ENCODE measurements at regions of chr7 and their contacts with region 1.

Region 1: DNA sequence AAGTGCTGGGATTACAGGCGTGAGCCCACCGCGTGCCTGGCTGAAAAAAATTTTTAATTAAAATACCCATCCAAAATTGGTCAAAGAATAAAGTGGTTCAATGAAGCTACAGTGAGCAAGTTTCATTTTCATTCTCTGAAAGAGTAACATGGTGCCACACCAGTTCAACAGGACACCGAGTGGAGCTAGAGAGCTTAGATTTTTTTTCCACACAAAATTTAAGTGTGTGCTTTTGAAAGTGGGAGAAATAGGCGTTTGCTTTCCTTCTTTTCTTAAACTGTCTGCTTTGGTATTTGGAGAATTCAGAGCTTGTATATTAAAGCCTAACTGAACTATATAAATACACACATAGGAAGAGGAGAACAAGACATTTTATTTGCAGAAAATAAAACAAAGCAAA is 43.4 kb downstream of the BPGM start:
- DNase-seq: peak; percentile 50
- H3K4me3 ChIP-seq: no peak overlapping the region
- H3K27ac ChIP-seq: peak overlapping the region; percentile 82 to 88; a peak in 3 of 4 replicates
- H3K4me1 ChIP-seq: peaks cover 12 to 39% of the 10 kb centered on the region in 2 experiments
- H3K27me3 ChIP-seq: no peaks in the 10 kb centered on the region
- CTCF ChIP-seq: peak; percentile 95
- EP300 ChIP-seq: no peak
- RAD21 ChIP-seq: peak; percentile 88

Region 2: GRCh38 chr7:134016223-134016941 is 673.6 kb before region 1 on chr7:
- CTCF ChIA-PET with region 1: no interaction called
- POLR2A ChIA-PET with region 1: no interaction called
- DNase-seq: peak; percentile 67
- H3K4me3 ChIP-seq: peak overlapping the region in 1 of 2 experiments; percentile 17; a peak in 1 of 4 replicates
- H3K27ac ChIP-seq: peak overlapping the region in 1 of 2 experiments; percentile 95; a peak in 2 of 4 replicates
- H3K4me1 ChIP-seq: peaks cover 0 to 25% of the 10 kb centered on the region in 2 experiments; a peak in 2 of 4 replicates
- H3K27me3 ChIP-seq: no peaks in the 10 kb centered on the region
- CTCF ChIP-seq: peak; percentile 95
- EP300 ChIP-seq: peak in 1 of 2 experiments; percentile 55; a peak in 1 of 4 replicates
- RAD21 ChIP-seq: peak; percentile 99

Region 3: DNA sequence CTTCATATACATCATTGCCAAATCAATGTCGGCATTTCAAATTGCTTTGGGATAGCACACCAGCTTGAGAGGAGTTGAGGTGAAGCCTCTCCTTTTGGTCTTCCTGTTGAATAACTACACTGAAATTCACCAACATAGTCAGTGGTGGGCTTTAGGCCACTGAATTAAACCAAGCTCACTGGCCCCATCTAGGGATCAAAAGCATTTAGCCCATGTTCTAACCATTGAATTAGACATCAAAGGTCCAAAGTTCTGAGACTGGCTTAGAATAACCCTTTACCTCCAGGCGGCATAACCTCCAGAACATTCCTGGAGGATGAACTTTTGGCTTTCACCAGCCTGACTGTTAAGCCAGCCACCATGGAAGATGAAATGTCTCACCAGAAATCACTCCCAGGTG is 11.3 kb after region 1 on chr7:
- CTCF ChIA-PET with region 1: interaction called, 30 read pairs
- POLR2A ChIA-PET with region 1: no interaction called
- DNase-seq: peak; percentile 48
- H3K4me3 ChIP-seq: no peak overlapping the region
- H3K27ac ChIP-seq: no peak overlapping the region
- H3K4me1 ChIP-seq: no peaks in the 10 kb centered on the region; a peak in 2 of 4 replicates
- H3K27me3 ChIP-seq: no peaks in the 10 kb centered on the region
- CTCF ChIP-seq: peak; percentile 62
- EP300 ChIP-seq: no peak
- RAD21 ChIP-seq: peak; percentile 66

Region 4: DNA sequence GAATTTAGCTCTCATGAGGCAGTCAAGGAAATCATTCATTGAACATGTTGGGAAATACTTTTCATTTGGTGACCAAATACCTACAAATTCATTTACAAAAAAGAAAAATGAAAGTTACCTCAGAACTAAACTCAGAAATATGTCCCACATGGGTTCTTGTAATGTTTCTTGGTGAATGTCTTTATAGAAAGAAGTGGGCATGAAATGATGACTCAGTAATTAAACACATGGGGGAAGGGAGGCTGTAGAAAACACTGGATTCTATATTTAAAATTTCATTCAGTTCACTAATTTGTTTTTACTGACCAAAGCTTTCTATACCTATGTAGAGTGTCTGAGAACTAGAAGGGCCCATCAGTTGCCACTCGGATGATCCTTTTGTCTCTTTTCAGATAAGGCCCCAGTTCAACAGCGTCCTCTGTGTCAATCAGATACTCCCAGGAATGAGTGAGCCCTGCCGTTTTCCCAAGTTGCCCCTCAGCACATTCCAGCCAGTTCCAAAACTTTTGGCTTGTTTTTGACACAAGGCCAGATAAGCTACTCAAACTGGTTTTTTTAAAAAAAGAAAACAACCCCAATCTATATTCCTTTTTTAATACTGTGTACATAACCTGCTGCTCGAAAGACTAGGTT is 247.0 kb after region 1 on chr7:
- CTCF ChIA-PET with region 1: interaction called, 114 read pairs
- POLR2A ChIA-PET with region 1: no interaction called
- DNase-seq: no peak
- H3K4me3 ChIP-seq: no peak overlapping the region
- H3K27ac ChIP-seq: peak overlapping the region in 1 of 2 experiments; percentile 33; a peak in 1 of 4 replicates
- H3K4me1 ChIP-seq: peaks cover 0 to 30% of the 10 kb centered on the region in 2 experiments; a peak in 3 of 4 replicates
- H3K27me3 ChIP-seq: no peaks in the 10 kb centered on the region
- CTCF ChIP-seq: no peak
- EP300 ChIP-seq: no peak
- RAD21 ChIP-seq: no peak

Region 5: GRCh38 chr7:134954197-134955082 is 264.4 kb after region 1 on chr7:
- CTCF ChIA-PET with region 1: interaction called, 42 read pairs
- POLR2A ChIA-PET with region 1: no interaction called
- DNase-seq: peak; percentile 44
- H3K4me3 ChIP-seq: no peak overlapping the region
- H3K27ac ChIP-seq: no peak overlapping the region
- H3K4me1 ChIP-seq: no peaks in the 10 kb centered on the region
- H3K27me3 ChIP-seq: no peaks in the 10 kb centered on the region
- CTCF ChIP-seq: peak; percentile 79
- EP300 ChIP-seq: no peak
- RAD21 ChIP-seq: peak; percentile 86

Measured in SK-N-SH (cell line).